Vagina (tissue), 2 donors: ENCODE measurements at regions of chr4 and their contacts with region 1.

Region 1: DNA sequence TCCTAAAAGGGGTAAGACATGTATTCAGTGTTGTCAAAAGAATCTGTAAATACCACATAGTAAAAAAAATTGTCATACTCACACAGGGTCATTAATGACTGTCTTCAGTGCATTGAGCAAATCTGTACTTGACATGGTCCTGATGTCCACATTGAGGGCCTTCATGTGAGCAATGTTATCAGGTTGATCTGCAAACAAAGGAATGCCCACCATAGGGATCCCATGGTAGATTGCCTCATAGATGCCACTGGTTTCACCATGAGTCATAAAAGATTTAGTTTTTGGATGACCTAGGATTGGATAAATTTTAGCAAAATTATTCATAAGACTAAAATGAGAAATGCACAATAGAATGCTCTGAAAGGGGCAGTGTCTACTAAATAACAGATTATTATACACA is 38.1 kb upstream of the UGT2B15 start:
- DNase-seq: no peak
- H3K4me3 ChIP-seq: no peak overlapping the region
- H3K27ac ChIP-seq: no peak overlapping the region
- H3K4me1 ChIP-seq: no peaks in the 10 kb centered on the region
- H3K27me3 ChIP-seq: no peaks in the 10 kb centered on the region
- CTCF ChIP-seq: no peak
- POLR2A ChIP-seq: no peak

Region 2: GRCh38 chr4:68691186-68691585 is 17.4 kb before region 1 on chr4:
- intact Hi-C with region 1: loop called (anchors 2 kb)
- DNase-seq: no peak
- H3K4me3 ChIP-seq: no peak overlapping the region
- H3K27ac ChIP-seq: no peak overlapping the region
- H3K4me1 ChIP-seq: no peaks in the 10 kb centered on the region
- H3K27me3 ChIP-seq: no peaks in the 10 kb centered on the region
- CTCF ChIP-seq: no peak
- POLR2A ChIP-seq: no peak